Sciatic nerve (tissue), 2 donors: ENCODE measurements at regions of chr12 and their contacts with region 1.

Region 1: GRCh38 chr12:124059752-124060151 is 86.7 kb downstream of the ZNF664 start:
- DNase-seq: no peak
- ATAC-seq: no peak

Region 2: DNA sequence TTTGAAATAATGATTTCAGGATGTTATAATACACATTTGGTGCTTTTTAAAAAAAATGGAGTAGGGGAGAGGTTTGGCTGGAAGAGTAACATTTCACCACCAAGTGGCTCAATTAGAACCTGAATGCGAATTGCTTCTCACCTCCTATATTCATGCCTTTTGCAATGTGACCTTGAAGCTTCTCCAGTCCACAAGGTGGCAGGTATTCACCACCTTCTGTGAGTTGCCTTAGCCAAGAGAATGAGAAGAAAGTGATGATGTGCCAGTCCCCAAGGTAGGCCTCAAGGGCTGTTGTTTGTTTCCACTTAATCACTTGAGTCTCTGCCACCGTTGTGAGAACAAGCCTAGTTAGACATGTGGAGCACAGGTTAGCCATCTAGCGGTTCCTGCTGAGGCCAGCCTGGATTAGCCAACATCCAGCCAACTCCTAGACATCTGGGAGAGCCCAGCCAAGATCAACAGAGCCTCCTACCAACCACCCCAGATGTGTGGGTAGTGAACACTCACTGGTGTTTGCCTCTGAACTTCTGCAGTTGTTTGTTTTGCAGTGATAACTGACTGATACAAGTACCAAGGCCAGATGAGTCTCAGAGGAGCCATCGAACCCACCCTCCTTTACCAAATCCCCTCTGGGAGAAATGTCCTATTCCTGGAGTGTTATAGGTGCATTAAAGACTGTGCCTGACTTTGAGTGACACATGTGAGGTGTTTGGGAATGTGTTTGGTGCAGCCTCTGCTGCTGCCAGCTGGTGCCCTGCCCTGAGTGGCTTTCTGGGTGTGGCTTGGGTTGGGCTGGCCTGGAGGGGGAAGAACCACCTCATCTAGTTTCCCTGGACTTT is 102.6 kb after region 1 on chr12:
- intact Hi-C with region 1: loop called (anchors 10 kb)
- DNase-seq: no peak
- ATAC-seq: no peak